Sigmoid colon (tissue), 7 donors: ENCODE measurements at regions of chr16 and their contacts with region 1.

Region 1: GRCh38 chr16:13453938-13454553 is 465.9 kb upstream of the ERCC4 start:
- DNase-seq: no peak
- H3K4me3 ChIP-seq: no peak overlapping the region
- H3K27ac ChIP-seq: no peak overlapping the region
- H3K4me1 ChIP-seq: no peaks in the 10 kb centered on the region
- H3K27me3 ChIP-seq: no peaks in the 10 kb centered on the region
- CTCF ChIP-seq: peak in 1 of 4 experiments; percentile 23
- EP300 ChIP-seq: no peak
- POLR2A ChIP-seq: no peak

Region 2: GRCh38 chr16:12850186-12850585 is 603.9 kb before region 1 on chr16:
- intact Hi-C with region 1: no loop called
- DNase-seq: no peak
- H3K4me3 ChIP-seq: no peak overlapping the region
- H3K27ac ChIP-seq: no peak overlapping the region
- H3K4me1 ChIP-seq: no peaks in the 10 kb centered on the region
- H3K27me3 ChIP-seq: no peaks in the 10 kb centered on the region
- CTCF ChIP-seq: no peak
- EP300 ChIP-seq: no peak
- POLR2A ChIP-seq: no peak

Region 3: GRCh38 chr16:12896562-12896961 is 557.5 kb before region 1 on chr16:
- intact Hi-C with region 1: loop called (anchors 10 kb)
- DNase-seq: no peak
- H3K4me3 ChIP-seq: no peak overlapping the region
- H3K27ac ChIP-seq: no peak overlapping the region
- H3K4me1 ChIP-seq: peaks cover 0 to 6% (median 3%) of the 10 kb centered on the region in 4 donors
- H3K27me3 ChIP-seq: peaks cover 4 to 24% (median 11%) of the 10 kb centered on the region in 3 donors
- CTCF ChIP-seq: no peak
- EP300 ChIP-seq: no peak
- POLR2A ChIP-seq: no peak

Region 4: GRCh38 chr16:13070268-13070667 is 383.8 kb before region 1 on chr16:
- intact Hi-C with region 1: no loop called
- DNase-seq: no peak
- H3K4me3 ChIP-seq: no peak overlapping the region
- H3K27ac ChIP-seq: no peak overlapping the region
- H3K4me1 ChIP-seq: no peaks in the 10 kb centered on the region
- H3K27me3 ChIP-seq: peaks cover 0 to 29% (median 0%) of the 10 kb centered on the region in 3 donors
- CTCF ChIP-seq: no peak
- EP300 ChIP-seq: no peak
- POLR2A ChIP-seq: no peak

Region 5: GRCh38 chr16:13529193-13529982 is 75.3 kb after region 1 on chr16:
- intact Hi-C with region 1: no loop called
- DNase-seq: no peak
- H3K4me3 ChIP-seq: no peak overlapping the region
- H3K27ac ChIP-seq: no peak overlapping the region
- H3K4me1 ChIP-seq: no peaks in the 10 kb centered on the region
- H3K27me3 ChIP-seq: no peaks in the 10 kb centered on the region
- CTCF ChIP-seq: no peak
- EP300 ChIP-seq: no peak
- POLR2A ChIP-seq: no peak

Region 6: DNA sequence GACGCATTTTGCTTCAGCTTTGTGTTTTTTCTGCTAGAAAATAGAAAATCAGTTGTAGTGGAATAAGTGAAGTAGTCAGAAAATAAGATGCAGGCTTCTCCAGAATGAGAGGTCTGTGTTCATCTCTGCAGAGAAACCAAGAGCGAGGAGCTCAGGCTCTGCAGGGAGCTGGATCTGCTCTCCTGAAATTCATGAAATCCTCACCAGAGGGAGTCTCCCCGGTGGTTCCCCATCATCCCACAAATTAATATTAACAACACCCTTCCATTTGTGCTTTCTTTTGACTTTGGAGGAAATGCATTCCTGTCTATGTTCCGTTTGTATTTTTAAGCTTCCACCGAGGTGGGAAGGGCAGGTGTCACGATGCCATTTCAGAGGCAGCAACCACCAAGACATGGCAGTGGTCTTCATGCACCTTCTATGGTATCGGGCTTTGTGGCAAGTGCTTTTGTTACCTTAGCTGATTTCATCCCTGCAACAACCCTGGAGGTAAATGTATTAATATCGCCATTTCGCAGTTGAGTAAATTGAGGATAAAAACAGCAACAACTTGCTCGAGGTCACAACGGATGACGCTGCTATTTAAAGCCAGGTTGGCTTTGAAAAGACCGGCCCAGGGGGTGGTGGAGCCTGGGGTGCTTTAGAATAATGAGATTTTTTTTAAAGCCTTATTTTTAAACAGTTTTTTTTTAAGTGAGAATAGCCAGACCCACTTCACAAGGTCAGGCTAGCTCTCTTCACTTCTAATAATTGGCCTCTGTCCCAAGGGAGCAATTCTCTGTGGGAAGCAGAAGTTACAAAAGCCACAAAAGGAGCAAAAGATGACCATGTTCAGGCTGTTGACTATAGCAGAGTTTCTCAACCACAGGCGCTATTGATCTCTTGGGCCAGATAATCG is 98.3 kb after region 1 on chr16:
- intact Hi-C with region 1: no loop called
- DNase-seq: no peak
- H3K4me3 ChIP-seq: no peak overlapping the region
- H3K27ac ChIP-seq: no peak overlapping the region
- H3K4me1 ChIP-seq: no peaks in the 10 kb centered on the region
- H3K27me3 ChIP-seq: peaks cover 0 to 11% (median 5%) of the 10 kb centered on the region in 3 donors
- CTCF ChIP-seq: no peak
- EP300 ChIP-seq: no peak
- POLR2A ChIP-seq: no peak